CD4-positive, alpha-beta memory T cell (primary cell): ENCODE measurements at regions of chr1 and their contacts with region 1.

Region 1: GRCh38 chr1:172662464-172663109 is 3.7 kb downstream of the FASLG start:
- DNase-seq: peak; percentile 82 to 93 (median 85)
- H3K4me3 ChIP-seq: peak overlapping the region in 1 of 2 donors; percentile 34
- H3K4me3 Mint-ChIP-seq: peak overlapping the region; percentile 79 to 95 (median 88)
- H3K27ac ChIP-seq: peak overlapping the region; percentile 33
- H3K27ac Mint-ChIP-seq: peak overlapping the region; percentile 57 to 90 (median 82)
- H3K4me1 ChIP-seq: peaks cover 59% of the 10 kb centered on the region
- H3K4me1 Mint-ChIP-seq: peaks cover 57 to 81% (median 69%) of the 10 kb centered on the region in 4 donors
- H3K27me3 ChIP-seq: no peaks in the 10 kb centered on the region
- H3K27me3 Mint-ChIP-seq: no peaks in the 10 kb centered on the region

Region 2: DNA sequence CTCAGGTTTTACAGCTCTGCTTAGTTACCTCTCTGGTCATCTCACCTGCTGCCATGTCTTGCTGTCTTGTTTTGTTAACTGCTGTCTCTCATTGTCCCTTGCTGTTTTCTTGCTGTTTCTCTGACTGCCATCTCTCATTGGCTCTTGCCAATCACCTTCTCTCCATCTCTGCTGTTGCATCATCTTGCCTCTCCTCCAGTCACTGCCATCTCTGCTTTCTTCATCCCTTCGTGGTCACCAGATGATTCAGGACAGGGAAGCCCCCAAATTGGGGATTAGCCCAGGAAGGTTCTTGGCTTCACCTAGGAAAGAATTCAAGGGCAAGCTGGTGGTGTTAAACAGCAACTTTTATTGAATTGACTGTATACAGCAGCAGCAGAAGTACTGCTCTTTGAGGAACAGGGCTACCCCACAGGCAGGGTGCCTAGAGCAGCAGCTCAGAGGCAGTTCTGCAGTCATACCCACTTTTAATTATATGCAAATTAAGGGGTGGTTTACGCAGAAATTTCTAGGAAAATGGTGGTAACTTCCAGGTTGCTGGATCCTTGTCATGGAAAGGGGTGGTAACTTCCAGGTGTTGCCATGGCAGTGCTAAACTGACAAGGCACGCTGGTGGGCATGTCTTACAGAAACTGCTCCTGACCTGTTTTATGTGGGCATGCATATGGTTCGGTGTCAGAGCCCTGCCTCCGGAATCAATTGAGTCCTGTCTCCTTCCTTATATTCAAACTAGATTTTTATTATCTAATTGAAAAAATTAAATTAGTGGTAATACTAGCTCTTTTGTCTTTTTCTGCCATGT is 96.2 kb before region 1 on chr1:
- CTCF ChIA-PET with region 1: no interaction called
- POLR2A ChIA-PET with region 1: no interaction called
- intact Hi-C with region 1: no loop called
- DNase-seq: no peak
- H3K4me3 ChIP-seq: no peak overlapping the region
- H3K4me3 Mint-ChIP-seq: no peak overlapping the region
- H3K27ac ChIP-seq: no peak overlapping the region
- H3K27ac Mint-ChIP-seq: peak overlapping the region in 3 of 7 donors; percentile 57 to 64 (median 63)
- H3K4me1 ChIP-seq: no peaks in the 10 kb centered on the region
- H3K4me1 Mint-ChIP-seq: peaks cover 3 to 14% (median 5%) of the 10 kb centered on the region in 4 donors
- H3K27me3 ChIP-seq: no peaks in the 10 kb centered on the region
- H3K27me3 Mint-ChIP-seq: no peaks in the 10 kb centered on the region

Region 3: GRCh38 chr1:172609528-172609927 is 53.1 kb before region 1 on chr1:
- CTCF ChIA-PET with region 1: interaction called, 8 read pairs
- POLR2A ChIA-PET with region 1: interaction called, 3 read pairs
- intact Hi-C with region 1: loop called (anchors 5 kb)
- DNase-seq: peak in 4 of 5 donors; percentile 34 to 41 (median 38)
- H3K4me3 ChIP-seq: no peak overlapping the region
- H3K4me3 Mint-ChIP-seq: no peak overlapping the region
- H3K27ac ChIP-seq: no peak overlapping the region
- H3K27ac Mint-ChIP-seq: peak overlapping the region in 1 of 7 donors; percentile 43
- H3K4me1 ChIP-seq: no peaks in the 10 kb centered on the region
- H3K4me1 Mint-ChIP-seq: peaks cover 4 to 9% (median 6%) of the 10 kb centered on the region in 4 donors
- H3K27me3 ChIP-seq: no peaks in the 10 kb centered on the region
- H3K27me3 Mint-ChIP-seq: no peaks in the 10 kb centered on the region

Region 4: DNA sequence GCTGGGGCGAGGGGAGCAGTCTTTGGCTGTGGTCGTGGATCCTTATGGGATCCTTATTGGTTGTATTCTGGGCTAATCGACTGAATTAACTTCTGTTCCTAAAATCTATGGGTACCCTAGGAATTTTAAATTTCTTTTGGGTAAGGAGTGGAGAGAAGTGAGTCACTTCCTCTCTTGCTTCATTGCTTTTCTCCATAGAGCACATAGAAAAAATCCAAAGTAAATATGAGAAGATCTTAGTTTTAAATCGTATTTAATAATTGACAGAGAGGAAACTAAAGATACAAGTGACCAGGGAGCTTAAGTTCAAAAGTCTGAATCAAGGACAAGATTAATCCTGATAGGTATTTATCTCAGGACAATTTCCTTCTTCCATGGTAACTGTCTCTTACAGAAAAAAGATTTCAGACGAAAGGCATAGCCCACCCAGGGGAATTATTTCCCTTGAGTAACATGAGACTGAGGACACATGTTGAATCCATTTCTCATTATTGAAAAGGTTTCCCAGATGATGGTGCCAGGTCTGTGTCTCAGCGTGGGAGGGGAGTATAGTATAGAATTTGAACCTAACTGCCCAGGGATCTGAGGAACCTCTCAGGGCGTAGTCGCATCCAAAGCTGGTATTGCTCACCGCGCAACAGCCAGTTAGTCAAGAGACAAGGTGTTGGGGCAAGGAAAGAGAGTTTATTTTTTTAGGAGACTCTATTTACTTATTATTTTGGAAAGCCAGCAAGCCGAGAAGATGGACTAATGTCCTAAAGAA is 32.4 kb before region 1 on chr1:
- CTCF ChIA-PET with region 1: interaction called, 6 read pairs
- POLR2A ChIA-PET with region 1: interaction called, 4 read pairs
- intact Hi-C with region 1: loop called (anchors 5 kb)
- DNase-seq: no peak
- H3K4me3 ChIP-seq: no peak overlapping the region
- H3K4me3 Mint-ChIP-seq: peak overlapping the region in 2 of 8 donors; percentile 15 to 50
- H3K27ac ChIP-seq: no peak overlapping the region
- H3K27ac Mint-ChIP-seq: peak overlapping the region in 1 of 7 donors; percentile 10
- H3K4me1 ChIP-seq: peaks cover 31% of the 10 kb centered on the region
- H3K4me1 Mint-ChIP-seq: peaks cover 28 to 64% (median 43%) of the 10 kb centered on the region in 4 donors
- H3K27me3 ChIP-seq: no peaks in the 10 kb centered on the region
- H3K27me3 Mint-ChIP-seq: no peaks in the 10 kb centered on the region

Region 5: DNA sequence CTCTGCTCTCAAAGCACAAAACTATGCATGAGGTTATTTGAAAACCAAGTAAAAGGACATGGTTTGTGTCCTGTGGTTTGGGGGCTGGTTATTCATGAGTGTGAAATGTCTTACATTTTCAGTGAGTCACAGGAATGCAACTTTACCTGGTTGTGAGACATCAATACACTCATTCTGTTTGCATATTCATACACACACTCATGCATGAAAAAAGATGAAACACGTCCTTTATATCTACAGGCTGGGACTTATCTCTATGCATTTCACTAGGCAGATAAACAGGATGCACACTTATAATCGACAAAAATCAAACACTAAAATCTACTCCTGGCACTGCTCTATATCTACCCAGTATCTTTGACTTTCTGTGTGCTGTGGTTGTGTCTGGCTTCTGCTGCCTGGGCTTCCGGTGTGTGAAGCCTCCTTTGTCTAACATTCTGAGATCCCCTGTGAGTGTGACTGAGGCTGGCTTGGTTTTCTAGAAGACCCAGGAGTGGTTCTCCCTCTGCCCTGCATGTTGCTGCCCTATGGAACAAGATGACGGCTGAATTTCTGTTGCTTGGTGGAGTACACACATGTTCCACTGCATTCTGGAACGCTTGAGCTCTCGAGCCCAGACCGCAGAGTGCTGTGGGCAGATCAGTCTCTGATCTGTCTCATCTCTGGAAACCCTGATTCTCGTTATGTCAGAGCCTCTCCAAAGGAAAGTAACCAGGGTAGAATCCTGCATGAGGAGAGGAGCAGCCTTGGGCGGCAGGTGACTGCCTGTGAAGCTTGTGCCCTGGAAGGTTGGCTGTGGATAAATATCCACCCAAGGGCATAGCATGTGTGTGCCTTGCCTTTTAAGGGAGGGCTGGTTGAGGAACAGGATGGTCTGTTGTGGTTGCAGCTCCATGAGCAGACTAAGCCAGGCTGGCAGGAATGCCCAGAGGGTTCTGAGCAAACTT is 23.4 kb before region 1 on chr1:
- CTCF ChIA-PET with region 1: interaction called, 5 read pairs
- POLR2A ChIA-PET with region 1: interaction called, 57 read pairs
- intact Hi-C with region 1: loop called (anchors 1 kb)
- DNase-seq: peak; percentile 73 to 89 (median 77)
- H3K4me3 ChIP-seq: peak overlapping the region; percentile 25 to 27
- H3K4me3 Mint-ChIP-seq: peak overlapping the region; percentile 73 to 86 (median 80)
- H3K27ac ChIP-seq: peak overlapping the region; percentile 38
- H3K27ac Mint-ChIP-seq: peak overlapping the region; percentile 82 to 94 (median 90)
- H3K4me1 ChIP-seq: peaks cover 74% of the 10 kb centered on the region
- H3K4me1 Mint-ChIP-seq: peaks cover 62 to 77% (median 72%) of the 10 kb centered on the region in 4 donors
- H3K27me3 ChIP-seq: no peaks in the 10 kb centered on the region
- H3K27me3 Mint-ChIP-seq: no peaks in the 10 kb centered on the region

Region 6: DNA sequence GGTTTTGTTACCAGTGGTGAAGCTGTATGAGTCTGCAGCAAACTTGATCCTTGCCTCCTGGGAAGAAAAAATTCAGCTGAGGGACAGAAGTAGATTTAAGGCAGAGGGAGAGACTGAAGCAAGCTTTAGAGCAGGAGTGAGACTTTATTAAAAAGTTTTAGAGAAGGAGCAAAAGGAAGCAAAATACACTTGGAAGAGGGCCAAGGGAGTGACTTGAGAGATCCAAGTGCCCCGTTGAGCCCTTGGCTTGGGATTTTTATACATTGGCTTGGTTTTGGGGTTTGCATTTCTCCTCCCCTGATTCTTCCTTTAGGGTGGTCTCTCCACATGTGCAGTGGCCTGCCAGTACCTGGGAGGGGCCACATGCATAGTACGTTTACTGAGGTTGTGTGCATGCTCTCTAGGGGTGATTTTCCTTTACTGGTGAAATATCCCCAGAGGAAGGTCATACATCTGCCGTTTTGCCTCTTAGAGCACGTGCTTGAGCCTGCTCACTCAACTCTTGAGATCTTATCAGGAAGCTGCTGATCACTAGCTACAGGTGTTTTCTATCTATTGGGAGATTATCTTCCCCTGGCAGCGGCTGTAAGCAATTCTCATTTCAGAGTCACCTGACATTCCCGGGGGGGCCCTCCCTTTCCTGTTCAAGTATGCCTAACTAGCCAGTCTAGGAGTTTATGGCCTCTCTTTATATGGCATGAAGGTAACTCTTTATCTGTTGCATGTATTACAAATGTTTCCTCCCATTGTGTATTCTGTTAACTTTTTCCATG is 16.6 kb after region 1 on chr1:
- CTCF ChIA-PET with region 1: interaction called, 6 read pairs
- POLR2A ChIA-PET with region 1: interaction called, 9 read pairs
- intact Hi-C with region 1: loop called (anchors 2 kb)
- DNase-seq: peak in 1 of 5 donors; percentile 50
- H3K4me3 ChIP-seq: no peak overlapping the region
- H3K4me3 Mint-ChIP-seq: peak overlapping the region in 3 of 8 donors; percentile 36 to 73 (median 39)
- H3K27ac ChIP-seq: no peak overlapping the region
- H3K27ac Mint-ChIP-seq: peak overlapping the region in 5 of 7 donors; percentile 35 to 75 (median 53)
- H3K4me1 ChIP-seq: peaks cover 38% of the 10 kb centered on the region
- H3K4me1 Mint-ChIP-seq: peaks cover 37 to 87% (median 63%) of the 10 kb centered on the region in 4 donors
- H3K27me3 ChIP-seq: no peaks in the 10 kb centered on the region
- H3K27me3 Mint-ChIP-seq: no peaks in the 10 kb centered on the region

Region 7: GRCh38 chr1:172699111-172699510 is 36.5 kb after region 1 on chr1:
- CTCF ChIA-PET with region 1: interaction called, 3 read pairs
- POLR2A ChIA-PET with region 1: interaction called, 25 read pairs
- intact Hi-C with region 1: loop called (anchors 1 kb)
- DNase-seq: peak; percentile 72 to 92 (median 77)
- H3K4me3 ChIP-seq: peak overlapping the region; percentile 17 to 38
- H3K4me3 Mint-ChIP-seq: peak overlapping the region; percentile 67 to 85 (median 76)
- H3K27ac ChIP-seq: peak overlapping the region; percentile 64
- H3K27ac Mint-ChIP-seq: peak overlapping the region in 6 of 7 donors; percentile 92 to 96 (median 94)
- H3K4me1 ChIP-seq: peaks cover 85% of the 10 kb centered on the region
- H3K4me1 Mint-ChIP-seq: peaks cover 0 to 54% (median 30%) of the 10 kb centered on the region in 4 donors
- H3K27me3 ChIP-seq: no peaks in the 10 kb centered on the region
- H3K27me3 Mint-ChIP-seq: no peaks in the 10 kb centered on the region

Region 8: GRCh38 chr1:172708452-172708851 is 45.9 kb after region 1 on chr1:
- CTCF ChIA-PET with region 1: interaction called, 7 read pairs
- POLR2A ChIA-PET with region 1: interaction called, 10 read pairs
- intact Hi-C with region 1: no loop called
- DNase-seq: peak; percentile 51 to 78 (median 61)
- H3K4me3 ChIP-seq: peak overlapping the region in 1 of 2 donors; percentile 0
- H3K4me3 Mint-ChIP-seq: peak overlapping the region; percentile 24 to 74 (median 62)
- H3K27ac ChIP-seq: no peak overlapping the region
- H3K27ac Mint-ChIP-seq: peak overlapping the region; percentile 16 to 84 (median 68)
- H3K4me1 ChIP-seq: peaks cover 58% of the 10 kb centered on the region
- H3K4me1 Mint-ChIP-seq: peaks cover 20 to 36% (median 30%) of the 10 kb centered on the region in 4 donors
- H3K27me3 ChIP-seq: no peaks in the 10 kb centered on the region
- H3K27me3 Mint-ChIP-seq: no peaks in the 10 kb centered on the region

Region 9: DNA sequence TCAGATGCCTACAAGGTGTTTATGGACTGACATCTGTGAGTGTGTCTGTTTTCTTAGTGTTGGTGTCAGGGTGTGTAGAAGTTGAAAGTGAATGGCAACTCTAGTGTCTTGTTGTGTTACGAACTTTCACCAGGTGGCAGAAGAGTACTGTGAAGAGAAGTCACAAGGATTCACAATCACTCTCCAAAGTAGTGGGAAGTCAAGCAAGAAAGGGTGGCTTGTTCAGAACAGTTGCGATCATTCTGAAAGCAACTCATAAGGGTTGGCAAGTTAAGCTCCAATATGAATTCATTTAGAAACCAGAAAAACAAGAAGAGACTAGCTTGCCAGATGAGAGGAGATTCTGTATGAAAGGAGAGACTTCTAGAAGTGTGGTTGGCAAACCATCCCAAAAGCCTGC is 82.4 kb after region 1 on chr1:
- CTCF ChIA-PET with region 1: no interaction called
- POLR2A ChIA-PET with region 1: no interaction called
- intact Hi-C with region 1: no loop called
- DNase-seq: peak; percentile 46 to 62 (median 59)
- H3K4me3 ChIP-seq: no peak overlapping the region
- H3K4me3 Mint-ChIP-seq: peak overlapping the region in 5 of 8 donors; percentile 46 to 81 (median 64)
- H3K27ac ChIP-seq: no peak overlapping the region
- H3K27ac Mint-ChIP-seq: peak overlapping the region in 6 of 7 donors; percentile 1 to 57 (median 22)
- H3K4me1 ChIP-seq: peaks cover 32% of the 10 kb centered on the region
- H3K4me1 Mint-ChIP-seq: peaks cover 29 to 38% (median 33%) of the 10 kb centered on the region in 4 donors
- H3K27me3 ChIP-seq: no peaks in the 10 kb centered on the region
- H3K27me3 Mint-ChIP-seq: peaks cover 0 to 3% of the 10 kb centered on the region in 2 donors